ENCODE measurements at regions of chr15 and their contacts with region 1.

Region 1: GRCh38 chr15:82108489-82109078 is 62.8 kb upstream of the MEX3B start:
- DNase-seq: peak; percentile 51
- ATAC-seq: peak; percentile 95
- H3K4me3 ChIP-seq: no peak overlapping the region
- H3K27ac ChIP-seq: no peak overlapping the region
- H3K4me1 ChIP-seq: no peaks in the 10 kb centered on the region
- H3K27me3 ChIP-seq: no peaks in the 10 kb centered on the region
- CTCF ChIP-seq: peak; percentile 98

Region 2: DNA sequence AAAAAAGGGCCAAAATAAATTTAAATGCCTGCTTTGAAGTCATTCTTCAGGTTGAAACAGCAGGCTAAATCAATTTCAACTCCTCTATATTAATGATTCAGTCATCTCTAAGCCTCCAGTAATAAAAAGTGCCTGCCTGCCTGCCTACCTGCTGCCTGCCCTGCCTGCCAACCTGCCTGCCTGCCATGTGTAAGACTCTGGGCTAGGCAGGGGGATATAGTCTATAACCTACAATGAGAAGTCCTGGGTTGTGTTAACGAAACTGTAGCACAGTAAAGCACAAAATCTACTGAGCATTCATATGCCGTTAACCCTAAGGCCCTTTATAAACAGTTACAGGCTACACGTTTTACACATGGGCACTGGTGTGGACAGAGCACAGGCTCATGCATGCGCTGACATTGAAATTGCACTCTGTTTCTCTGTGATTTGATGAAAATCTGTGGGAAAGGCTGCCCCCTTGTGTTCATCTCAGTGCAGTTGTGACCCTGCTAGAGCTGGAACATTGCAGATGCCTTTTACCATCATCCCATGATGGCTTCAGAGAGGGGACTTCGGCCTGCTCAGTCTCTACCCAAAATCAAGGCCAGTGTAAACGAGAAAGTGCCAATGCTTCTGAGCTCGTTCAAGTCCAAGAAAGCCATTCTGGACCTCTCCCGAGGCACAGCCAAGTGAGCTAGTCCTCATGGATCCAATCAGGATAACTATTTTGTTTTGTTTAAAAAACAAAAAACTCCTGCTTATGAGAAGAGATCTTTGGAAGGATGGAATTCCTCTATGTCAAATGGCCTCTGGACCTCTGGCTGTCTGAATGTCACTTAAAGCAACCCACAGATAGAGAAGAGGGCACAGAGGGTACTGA is 89.4 kb after region 1 on chr15:
- CTCF ChIA-PET with region 1: interaction called, 14 read pairs
- POLR2A ChIA-PET with region 1: no interaction called
- in situ Hi-C with region 1: no loop called
- intact Hi-C with region 1: loop called (anchors 1 kb)
- DNase-seq: peak; percentile 52
- ATAC-seq: peak; percentile 100
- H3K4me3 ChIP-seq: no peak overlapping the region
- H3K27ac ChIP-seq: no peak overlapping the region
- H3K4me1 ChIP-seq: no peaks in the 10 kb centered on the region
- H3K27me3 ChIP-seq: no peaks in the 10 kb centered on the region
- CTCF ChIP-seq: peak; percentile 86

Region 3: DNA sequence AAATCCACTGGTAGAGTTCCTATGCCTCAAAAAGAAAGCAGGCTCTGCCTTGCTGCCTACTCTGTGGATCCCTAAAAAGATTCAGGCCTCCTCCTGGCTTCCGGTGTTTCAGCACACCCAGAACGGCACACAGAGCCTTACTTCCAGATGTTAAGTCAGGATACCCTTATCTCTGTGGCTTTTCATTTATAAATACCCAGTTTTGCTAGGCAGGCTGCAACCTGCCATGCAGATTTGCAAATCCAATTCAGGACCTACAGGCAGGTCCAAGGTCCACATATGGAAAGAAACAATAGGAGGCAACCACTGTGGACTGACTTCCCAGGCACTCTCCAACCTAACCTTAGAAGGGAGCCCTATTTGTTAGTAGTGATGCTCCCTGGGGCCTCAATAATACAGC is 123.3 kb after region 1 on chr15:
- CTCF ChIA-PET with region 1: no interaction called
- POLR2A ChIA-PET with region 1: no interaction called
- in situ Hi-C with region 1: no loop called
- intact Hi-C with region 1: no loop called
- DNase-seq: no peak
- ATAC-seq: no peak
- H3K4me3 ChIP-seq: no peak overlapping the region
- H3K27ac ChIP-seq: no peak overlapping the region
- H3K4me1 ChIP-seq: no peaks in the 10 kb centered on the region
- H3K27me3 ChIP-seq: no peaks in the 10 kb centered on the region
- CTCF ChIP-seq: no peak